ENCODE measurements at regions of chr12 and their contacts with region 1.

Region 1: DNA sequence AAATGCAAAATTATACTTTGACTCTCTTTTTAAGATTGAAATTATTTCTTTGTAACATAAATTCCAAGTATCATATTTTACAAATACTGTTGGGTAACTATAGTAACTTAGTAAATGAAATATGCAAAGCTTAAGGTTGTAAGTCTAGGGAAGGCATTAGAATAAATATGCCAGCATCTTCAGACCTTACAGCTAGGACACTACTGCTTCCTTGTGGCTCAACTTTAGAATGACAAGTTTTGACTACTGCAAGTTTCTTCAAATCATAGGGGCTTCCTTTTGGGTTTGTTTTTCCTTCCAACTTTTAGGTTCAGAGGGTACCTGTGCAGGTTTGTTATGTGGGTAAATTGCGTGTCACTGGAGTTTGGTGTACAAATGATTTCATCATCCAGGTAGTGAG is 17.7 kb upstream of the ANP32D start:
- DNase-seq: no peak

Region 2: GRCh38 chr12:48069241-48069640 is 385.4 kb before region 1 on chr12:
- intact Hi-C with region 1: no loop called
- DNase-seq: no peak

Region 3: GRCh38 chr12:48350249-48351021 is 104.2 kb before region 1 on chr12 and contains the start of gene ZNF641:
- intact Hi-C with region 1: loop called in 1 of 2 experiments (anchors 10 kb)
- DNase-seq: peak; percentile 94
- total RNA-seq, gene ZNF641: 16.8 to 22.3 TPM

Region 4: GRCh38 chr12:48489012-48489411 is 34.3 kb after region 1 on chr12:
- intact Hi-C with region 1: no loop called
- DNase-seq: no peak